A549 (cell line): ENCODE measurements at regions of chr11 and their contacts with region 1.

Region 1: DNA sequence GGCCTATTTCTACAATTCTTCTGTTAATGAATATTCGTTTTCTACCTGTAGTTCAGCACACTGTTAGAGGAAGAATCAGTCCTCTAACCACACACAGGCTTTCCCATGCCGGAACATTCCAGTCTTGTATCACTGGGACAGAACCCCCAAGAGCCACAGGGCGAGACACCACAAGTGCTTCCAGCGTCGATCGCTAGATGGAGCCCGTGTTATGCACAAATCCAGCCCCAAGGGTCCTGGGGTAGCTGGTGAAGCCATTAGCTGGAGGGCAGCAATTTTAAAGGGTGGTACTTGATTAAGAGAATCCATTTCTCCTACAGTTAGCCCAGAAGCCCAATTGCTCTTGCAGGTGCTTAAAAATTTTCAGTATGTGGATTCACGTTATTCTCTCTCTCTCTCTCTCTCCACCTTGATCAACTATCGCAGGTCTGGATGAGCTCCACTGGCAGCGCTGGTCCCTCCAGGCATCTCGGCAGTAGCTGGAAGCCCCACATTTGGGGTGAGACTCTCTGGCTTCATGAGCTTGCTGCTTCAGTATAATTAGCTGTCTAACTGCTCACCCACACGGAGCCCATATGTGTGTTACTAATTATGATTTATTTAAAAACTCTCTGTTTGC is 148.2 kb upstream of the SNX19 start:
- DNase-seq: peak; percentile 52 to 54
- ATAC-seq: peak; percentile 81 to 94
- H3K4me3 ChIP-seq: no peak overlapping the region
- H3K27ac ChIP-seq: no peak overlapping the region
- H3K4me1 ChIP-seq: no peaks in the 10 kb centered on the region
- CTCF ChIP-seq: peak; percentile 72
- EP300 ChIP-seq: no peak
- POLR2A ChIP-seq: no peak
- RAD21 ChIP-seq: peak; percentile 77 to 82

Region 2: GRCh38 chr11:131253656-131254151 is 189.2 kb after region 1 on chr11:
- CTCF ChIA-PET with region 1: no interaction called
- POLR2A ChIA-PET with region 1: no interaction called
- DNase-seq: no peak
- ATAC-seq: no peak
- H3K4me3 ChIP-seq: no peak overlapping the region
- H3K27ac ChIP-seq: no peak overlapping the region
- H3K4me1 ChIP-seq: no peaks in the 10 kb centered on the region
- CTCF ChIP-seq: no peak
- EP300 ChIP-seq: no peak
- POLR2A ChIP-seq: no peak
- RAD21 ChIP-seq: no peak

Region 3: DNA sequence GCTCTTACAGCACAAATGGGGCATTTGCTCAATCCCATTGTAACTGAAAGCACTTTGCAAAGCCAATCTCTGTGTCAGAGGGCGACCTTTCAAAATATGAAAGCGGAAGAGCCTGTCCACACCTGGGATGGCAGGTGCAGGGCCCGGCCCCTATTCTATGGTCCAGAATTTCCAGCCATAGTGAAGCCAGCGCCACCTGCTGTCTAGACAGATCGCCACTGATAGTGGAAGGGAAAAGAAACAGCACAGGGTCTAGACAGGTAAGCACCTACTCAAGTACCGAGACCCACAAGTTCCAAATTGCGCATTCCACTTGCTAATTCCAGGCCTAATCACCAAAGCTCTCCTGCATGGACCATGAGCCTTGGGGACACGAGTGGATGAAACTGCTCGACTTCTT is 447.3 kb after region 1 on chr11:
- CTCF ChIA-PET with region 1: interaction called, 13 read pairs
- POLR2A ChIA-PET with region 1: no interaction called
- DNase-seq: peak in 1 of 2 experiments; percentile 9
- ATAC-seq: peak in 1 of 2 experiments; percentile 72; a peak in 3 of 6 replicates
- H3K4me3 ChIP-seq: no peak overlapping the region
- H3K27ac ChIP-seq: no peak overlapping the region
- H3K4me1 ChIP-seq: no peaks in the 10 kb centered on the region
- CTCF ChIP-seq: no peak
- EP300 ChIP-seq: no peak
- POLR2A ChIP-seq: no peak
- RAD21 ChIP-seq: peak; percentile 13 to 42; a peak in 2 of 5 replicates